ENCODE measurements at regions of chr10 and their contacts with region 1.

Region 1: GRCh38 chr10:3043512-3044368 is 23.6 kb upstream of the PFKP start:
- DNase-seq: no peak
- H3K4me3 ChIP-seq: no peak overlapping the region
- H3K27ac ChIP-seq: peak overlapping the region; percentile 35 to 71 (median 66)
- H3K4me1 ChIP-seq: peaks cover 26 to 48% (median 46%) of the 10 kb centered on the region in 4 donors
- H3K27me3 ChIP-seq: no peaks in the 10 kb centered on the region
- CTCF ChIP-seq: peak; percentile 71 to 92 (median 76)
- EP300 ChIP-seq: no peak
- POLR2A ChIP-seq: no peak

Region 2: GRCh38 chr10:2839081-2839725 is 204.5 kb before region 1 on chr10:
- intact Hi-C with region 1: loop called (anchors 5 kb)
- DNase-seq: peak; percentile 81
- H3K4me3 ChIP-seq: no peak overlapping the region
- H3K27ac ChIP-seq: no peak overlapping the region
- H3K4me1 ChIP-seq: peaks cover 0 to 4% (median 2%) of the 10 kb centered on the region in 4 donors
- H3K27me3 ChIP-seq: peaks cover 0 to 11% (median 0%) of the 10 kb centered on the region in 4 donors
- CTCF ChIP-seq: peak in 1 of 3 experiments; percentile 51
- EP300 ChIP-seq: no peak
- POLR2A ChIP-seq: no peak

Region 3: DNA sequence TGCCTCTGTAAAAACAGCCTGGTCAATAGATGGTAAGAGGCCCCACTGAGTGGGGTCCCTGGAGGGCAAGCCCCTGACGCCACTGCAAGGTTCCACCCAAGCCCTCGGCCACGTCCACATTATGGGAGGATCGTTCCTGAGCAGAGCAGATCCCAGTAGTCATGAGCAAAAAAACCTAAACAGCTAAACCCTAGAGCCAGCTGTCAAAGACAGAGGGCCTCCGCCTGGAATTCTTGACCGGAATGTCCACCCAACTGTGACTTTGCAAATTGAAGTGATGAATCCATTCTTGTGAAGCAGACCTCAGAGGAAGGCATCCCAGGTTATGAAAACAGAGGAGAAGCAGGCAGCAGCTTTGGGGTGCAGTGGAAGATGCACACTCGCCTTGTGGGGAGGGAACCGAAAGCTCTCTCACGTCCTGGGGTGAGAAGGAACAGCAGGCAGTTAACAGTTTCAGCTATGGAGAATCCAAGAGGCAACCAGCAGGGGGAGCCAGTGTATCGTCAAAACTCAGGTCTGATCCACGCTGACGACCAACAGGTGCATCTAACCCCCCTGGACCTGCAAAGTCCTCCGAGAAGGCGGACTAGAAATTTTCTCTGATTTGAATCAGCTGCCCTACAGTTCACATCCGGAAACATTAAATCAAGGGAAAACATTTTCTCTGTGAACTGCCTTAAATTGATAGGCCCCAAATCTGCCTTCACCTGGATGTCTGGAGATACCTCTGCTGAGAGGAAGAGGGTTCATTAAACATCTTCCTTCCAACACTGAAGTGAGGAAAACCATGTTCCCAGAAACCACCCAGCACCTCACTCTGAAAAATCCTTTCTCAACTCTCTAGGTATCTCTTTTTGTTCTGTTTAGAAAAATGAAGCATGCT is 115.5 kb before region 1 on chr10:
- intact Hi-C with region 1: loop called (anchors 5 kb)
- DNase-seq: no peak
- H3K4me3 ChIP-seq: no peak overlapping the region
- H3K27ac ChIP-seq: no peak overlapping the region
- H3K4me1 ChIP-seq: peaks cover 0 to 12% (median 7%) of the 10 kb centered on the region in 4 donors
- H3K27me3 ChIP-seq: peaks cover 0 to 10% (median 0%) of the 10 kb centered on the region in 4 donors
- CTCF ChIP-seq: peak; percentile 67 to 74 (median 69)
- EP300 ChIP-seq: no peak
- POLR2A ChIP-seq: no peak

Region 4: DNA sequence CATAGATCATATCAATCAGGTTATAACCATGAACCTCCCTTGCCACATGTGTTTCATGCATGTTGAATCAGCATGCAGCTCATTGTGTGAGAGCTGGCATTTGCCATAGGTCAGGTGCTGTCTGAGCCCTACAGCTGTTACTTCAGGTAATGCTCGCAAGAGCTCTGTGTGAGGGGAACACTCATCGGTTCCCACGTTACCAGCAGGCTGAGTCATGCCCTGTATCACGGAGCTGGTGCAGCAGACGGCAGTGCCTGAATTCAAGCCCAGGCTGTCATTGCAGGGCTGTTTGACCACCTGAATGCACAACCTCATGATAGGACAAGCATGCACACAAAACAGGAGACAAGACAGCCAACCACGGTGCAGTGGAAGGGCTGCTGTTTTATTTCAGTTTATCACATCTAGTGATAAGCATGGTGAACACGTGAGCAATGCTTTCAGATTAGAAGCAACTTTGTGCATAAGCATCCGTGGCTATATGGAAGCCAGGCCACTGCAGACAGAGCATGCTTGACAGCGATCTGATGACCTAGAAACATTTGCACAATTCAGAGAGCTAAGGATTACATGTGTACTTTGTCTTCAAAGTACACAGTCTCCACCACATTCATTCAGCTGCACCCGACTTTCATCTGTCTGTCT is 32.8 kb before region 1 on chr10:
- intact Hi-C with region 1: no loop called
- DNase-seq: no peak
- H3K4me3 ChIP-seq: no peak overlapping the region
- H3K27ac ChIP-seq: no peak overlapping the region
- H3K4me1 ChIP-seq: peaks cover 3 to 21% (median 15%) of the 10 kb centered on the region in 4 donors
- H3K27me3 ChIP-seq: peaks cover 0 to 22% (median 0%) of the 10 kb centered on the region in 4 donors
- CTCF ChIP-seq: no peak
- EP300 ChIP-seq: no peak
- POLR2A ChIP-seq: no peak

Region 5: DNA sequence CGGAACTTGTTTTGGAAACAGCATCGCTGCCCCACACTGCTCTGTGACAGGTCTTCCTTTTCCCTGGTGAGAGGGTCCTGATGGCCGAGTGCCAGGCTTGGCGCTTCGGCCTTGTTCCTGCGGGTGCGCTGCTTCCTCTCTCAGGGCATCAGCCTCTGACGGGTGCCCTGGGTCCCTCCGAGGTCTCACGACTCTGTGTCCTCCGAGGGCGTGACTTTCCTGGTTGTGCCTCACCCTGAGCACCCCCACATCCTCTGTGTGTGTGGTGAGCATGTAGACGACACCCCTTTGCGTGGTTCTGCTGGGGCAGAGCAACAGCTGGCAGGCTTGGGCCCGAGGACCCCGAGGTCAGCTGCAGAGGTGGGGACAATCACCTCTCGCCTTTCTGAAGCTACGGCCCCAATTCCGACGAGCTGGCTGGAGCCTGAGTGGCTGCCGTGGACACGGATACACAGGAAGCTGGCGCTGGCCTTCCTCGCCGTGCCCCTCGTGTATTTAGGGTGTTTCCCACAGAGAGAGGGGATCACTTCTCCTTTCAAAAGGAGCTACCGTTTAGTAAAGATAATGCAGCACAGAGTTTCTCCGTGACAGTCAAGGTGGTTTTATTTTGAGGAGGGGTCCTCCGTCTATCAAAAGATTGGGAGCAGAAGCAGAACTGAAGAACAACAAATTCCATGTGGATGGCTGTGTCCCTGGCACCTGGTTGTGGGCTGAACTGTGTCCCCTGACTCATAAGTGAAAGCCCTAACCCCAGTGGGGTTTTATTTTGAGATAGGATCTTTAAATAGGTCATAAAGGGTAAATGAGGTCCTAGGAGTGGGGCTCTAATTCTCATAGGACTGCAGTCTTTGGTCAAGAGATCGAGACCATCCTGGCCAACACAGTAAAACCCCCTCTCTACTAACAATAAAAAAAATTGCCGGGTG is 165.0 kb after region 1 on chr10:
- intact Hi-C with region 1: no loop called
- DNase-seq: no peak
- H3K4me3 ChIP-seq: no peak overlapping the region
- H3K27ac ChIP-seq: no peak overlapping the region
- H3K4me1 ChIP-seq: no peaks in the 10 kb centered on the region
- H3K27me3 ChIP-seq: peaks cover 0 to 10% (median 0%) of the 10 kb centered on the region in 4 donors
- CTCF ChIP-seq: no peak
- EP300 ChIP-seq: no peak
- POLR2A ChIP-seq: no peak